ENCODE measurements at regions of chr15 and their contacts with region 1.

Region 1: DNA sequence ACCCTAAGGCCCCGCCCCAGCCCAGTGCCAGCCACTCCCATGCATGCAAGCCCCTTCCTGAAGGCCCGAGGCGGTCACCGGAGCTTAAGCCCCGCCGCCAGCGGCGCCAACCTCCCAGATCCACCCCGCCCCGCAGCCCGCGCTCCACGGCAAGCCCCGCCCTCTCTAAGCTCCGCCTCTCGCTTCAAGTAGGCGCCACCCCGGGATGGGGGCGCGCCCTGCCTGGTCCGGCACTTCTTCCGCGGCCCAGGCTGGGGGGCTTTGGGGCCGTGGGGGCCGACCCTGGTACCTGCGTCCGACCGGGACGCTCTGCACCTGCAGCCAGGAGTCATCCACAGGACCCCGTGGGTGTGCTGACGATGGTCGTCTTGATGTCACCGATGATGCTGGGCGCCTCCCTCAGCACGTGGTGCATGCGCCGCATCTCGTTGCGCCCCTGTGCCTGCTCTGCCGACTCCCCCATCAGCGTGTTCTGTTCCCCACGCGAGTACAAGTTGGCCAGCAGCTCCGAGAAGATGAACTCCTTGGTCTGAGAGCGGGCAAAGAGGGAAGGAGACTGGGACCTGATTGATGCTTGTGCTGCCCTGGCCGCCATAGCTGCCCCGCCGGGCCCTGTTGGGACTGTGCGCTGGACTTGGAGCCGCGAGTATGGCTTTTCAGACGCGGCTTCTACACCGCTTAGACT is 26.1 kb upstream of the CSPG4 start:
- DNase-seq: peak; percentile 81 to 92 (median 88)
- ATAC-seq: peak; percentile 97
- H3K4me3 ChIP-seq: peak overlapping the region; percentile 84
- H3K4me3 Mint-ChIP-seq: peak overlapping the region; percentile 83 to 94 (median 88)
- H3K27ac ChIP-seq: peak overlapping the region; percentile 58
- H3K27ac Mint-ChIP-seq: peak overlapping the region in 7 of 9 donors; percentile 51 to 86 (median 80)
- H3K4me1 ChIP-seq: peaks cover 0 to 6% of the 10 kb centered on the region in 2 donors
- H3K4me1 Mint-ChIP-seq: peaks cover 4 to 15% (median 12%) of the 10 kb centered on the region in 7 donors
- H3K27me3 ChIP-seq: no peaks in the 10 kb centered on the region
- H3K27me3 Mint-ChIP-seq: peaks cover 0 to 41% (median 0%) of the 10 kb centered on the region in 5 donors

Region 2: DNA sequence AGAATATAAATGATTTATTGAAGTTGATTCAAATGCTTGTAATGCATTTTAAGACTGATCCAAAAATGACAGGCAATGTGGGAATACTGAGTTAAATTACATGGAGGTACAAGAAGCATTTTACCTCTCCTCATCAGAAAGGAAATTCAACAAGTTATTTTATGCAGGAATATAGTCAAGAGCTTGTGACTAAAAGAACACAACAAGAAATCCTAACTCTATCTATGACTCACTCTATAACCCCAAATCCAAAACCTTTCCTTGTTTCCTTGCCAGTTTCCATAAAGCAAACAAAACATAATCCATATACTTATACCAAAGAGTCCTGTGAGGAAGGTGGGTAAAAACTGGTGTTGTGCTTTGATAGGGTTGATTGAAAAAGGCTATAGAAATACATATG is 318.1 kb before region 1 on chr15:
- CTCF ChIA-PET with region 1: no interaction called
- POLR2A ChIA-PET with region 1: no interaction called
- intact Hi-C with region 1: no loop called
- DNase-seq: no peak
- ATAC-seq: no peak
- H3K4me3 ChIP-seq: no peak overlapping the region
- H3K4me3 Mint-ChIP-seq: no peak overlapping the region
- H3K27ac ChIP-seq: no peak overlapping the region
- H3K27ac Mint-ChIP-seq: no peak overlapping the region
- H3K4me1 ChIP-seq: no peaks in the 10 kb centered on the region
- H3K4me1 Mint-ChIP-seq: peaks cover 4 to 19% (median 16%) of the 10 kb centered on the region in 7 donors
- H3K27me3 ChIP-seq: no peaks in the 10 kb centered on the region
- H3K27me3 Mint-ChIP-seq: no peaks in the 10 kb centered on the region

Region 3: GRCh38 chr15:75758071-75758872 is 19.5 kb after region 1 on chr15:
- CTCF ChIA-PET with region 1: no interaction called
- POLR2A ChIA-PET with region 1: no interaction called
- intact Hi-C with region 1: loop called (anchors 1 kb)
- DNase-seq: peak; percentile 31 to 71 (median 39)
- ATAC-seq: peak; percentile 90
- H3K4me3 ChIP-seq: peak overlapping the region; percentile 64
- H3K4me3 Mint-ChIP-seq: peak overlapping the region; percentile 83 to 92 (median 87)
- H3K27ac ChIP-seq: peak overlapping the region; percentile 82
- H3K27ac Mint-ChIP-seq: peak overlapping the region; percentile 68 to 95 (median 88)
- H3K4me1 ChIP-seq: peaks cover 0 to 4% of the 10 kb centered on the region in 2 donors
- H3K4me1 Mint-ChIP-seq: peaks cover 6 to 20% (median 16%) of the 10 kb centered on the region in 7 donors
- H3K27me3 ChIP-seq: no peaks in the 10 kb centered on the region
- H3K27me3 Mint-ChIP-seq: peaks cover 0 to 5% (median 0%) of the 10 kb centered on the region in 5 donors

Region 4: DNA sequence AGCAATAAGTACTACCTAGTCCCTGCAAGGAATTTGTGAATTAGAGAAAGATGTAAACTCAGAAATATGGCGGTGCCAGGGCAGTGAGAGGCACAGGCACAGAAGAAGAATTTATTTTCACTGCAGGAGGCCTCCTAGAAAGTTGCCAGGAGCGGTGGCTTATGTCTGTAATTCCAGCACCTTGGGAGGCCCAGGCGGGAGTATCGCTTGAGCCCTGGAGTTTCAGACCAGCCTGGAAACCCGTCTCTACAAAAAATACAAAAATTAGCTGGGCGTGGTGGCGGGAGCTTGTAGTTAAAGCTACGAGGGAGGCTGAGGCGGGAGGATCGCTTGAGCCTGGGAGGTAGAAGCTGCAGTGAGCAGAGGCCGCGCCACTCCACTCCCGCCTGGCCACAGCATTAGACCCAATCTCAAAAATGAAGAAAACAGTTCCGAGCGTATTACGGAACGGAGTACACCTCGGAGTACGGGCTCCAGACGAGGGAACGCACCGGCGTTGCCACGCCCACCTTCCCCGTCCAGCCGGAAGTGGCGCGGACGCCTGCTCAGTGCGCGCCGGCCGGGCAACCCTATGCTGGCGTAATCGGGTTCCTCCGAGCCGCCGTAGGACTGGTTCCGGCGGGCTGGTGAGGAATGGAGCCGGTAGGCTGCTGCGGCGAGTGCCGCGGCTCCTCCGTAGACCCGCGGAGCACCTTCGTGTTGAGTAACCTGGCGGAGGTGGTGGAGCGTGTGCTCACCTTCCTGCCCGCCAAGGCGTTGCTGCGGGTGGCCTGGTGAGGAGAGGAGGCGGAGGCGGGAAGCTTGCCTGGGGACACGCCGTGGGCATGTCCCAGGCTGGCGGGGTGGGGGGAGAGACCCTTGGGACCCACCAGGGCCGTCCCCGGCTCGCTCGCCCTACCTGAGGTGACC is 164.8 kb after region 1 on chr15 and contains the start of gene FBXO22:
- CTCF ChIA-PET with region 1: no interaction called
- POLR2A ChIA-PET with region 1: no interaction called
- intact Hi-C with region 1: loop called in 1 of 2 experiments (anchors 5 kb)
- DNase-seq: peak; percentile 79 to 92 (median 85)
- ATAC-seq: peak; percentile 98
- H3K4me3 ChIP-seq: peak within 1 kb of the TSS; percentile 91
- H3K4me3 Mint-ChIP-seq: peak within 1 kb of the TSS; percentile 96 to 99 (median 98)
- H3K27ac ChIP-seq: peak within 1 kb of the TSS; percentile 79
- H3K27ac Mint-ChIP-seq: peak within 1 kb of the TSS; percentile 91 to 97 (median 94)
- H3K4me1 ChIP-seq: peaks cover 0 to 12% of the 10 kb centered on the region in 2 donors
- H3K4me1 Mint-ChIP-seq: peaks cover 15 to 70% (median 51%) of the 10 kb centered on the region in 7 donors
- H3K27me3 ChIP-seq: no peaks in the 10 kb centered on the region
- H3K27me3 Mint-ChIP-seq: no peaks in the 10 kb centered on the region
- total RNA-seq, gene FBXO22: 9.7 to 34.5 (median 25.5) TPM